Stomach (tissue), 19 donors: ENCODE measurements at regions of chr9 and their contacts with region 1.

Region 1: DNA sequence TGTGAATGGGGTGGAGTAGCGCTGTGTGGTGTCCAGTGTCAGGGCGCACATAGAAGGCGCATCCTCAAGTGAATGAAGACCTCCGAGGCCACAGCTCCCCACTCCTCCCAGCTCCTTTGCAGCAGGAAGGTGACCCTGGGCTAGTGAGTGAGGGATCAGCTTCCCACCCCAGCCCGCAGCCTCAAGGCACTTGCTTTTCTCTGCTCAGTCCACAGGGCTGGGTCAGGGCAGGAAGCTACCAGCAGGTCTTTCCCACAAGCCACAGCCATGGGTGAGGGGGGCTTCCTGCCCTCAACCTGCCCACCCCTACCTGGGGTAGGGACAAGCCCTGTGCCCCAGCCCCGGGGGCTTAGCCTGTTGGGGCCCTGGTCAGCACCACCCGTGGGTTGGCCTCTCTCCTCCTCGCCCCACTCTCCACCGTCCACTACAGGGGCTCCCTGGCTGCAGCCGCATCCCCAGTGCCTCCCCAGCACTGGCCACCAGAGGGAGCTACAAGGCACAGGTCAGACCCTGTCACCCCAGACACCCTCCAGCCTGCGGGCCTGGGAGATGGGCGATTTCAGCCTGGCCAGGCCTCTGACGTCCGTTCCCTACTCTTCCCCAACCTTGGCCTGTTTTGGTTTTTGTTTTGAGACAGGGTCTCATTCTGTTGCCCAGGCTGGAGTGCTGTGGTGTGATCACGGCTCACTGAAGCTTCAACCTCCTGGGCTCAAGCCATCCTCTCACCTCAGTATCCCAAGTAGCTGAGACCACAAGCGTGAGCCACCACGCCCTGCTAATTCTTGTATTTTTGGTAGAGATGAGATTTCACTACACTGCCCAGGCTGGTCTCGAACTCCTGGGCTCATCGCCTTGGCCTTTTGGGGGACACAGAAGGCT is 1.3 kb upstream of the ABCA2 start:
- DNase-seq: peak; percentile 84 to 85
- H3K4me3 ChIP-seq: peak overlapping the region; percentile 57 to 69 (median 64)
- H3K27ac ChIP-seq: peak overlapping the region; percentile 54 to 81 (median 64)
- H3K4me1 ChIP-seq: peaks cover 40 to 75% (median 60%) of the 10 kb centered on the region in 4 donors
- H3K27me3 ChIP-seq: peaks cover 0 to under 1% (median 0%) of the 10 kb centered on the region in 3 donors
- CTCF ChIP-seq: peak in 6 of 7 experiments; percentile 37 to 94 (median 88)
- EP300 ChIP-seq: no peak
- POLR2A ChIP-seq: no peak

Region 2: DNA sequence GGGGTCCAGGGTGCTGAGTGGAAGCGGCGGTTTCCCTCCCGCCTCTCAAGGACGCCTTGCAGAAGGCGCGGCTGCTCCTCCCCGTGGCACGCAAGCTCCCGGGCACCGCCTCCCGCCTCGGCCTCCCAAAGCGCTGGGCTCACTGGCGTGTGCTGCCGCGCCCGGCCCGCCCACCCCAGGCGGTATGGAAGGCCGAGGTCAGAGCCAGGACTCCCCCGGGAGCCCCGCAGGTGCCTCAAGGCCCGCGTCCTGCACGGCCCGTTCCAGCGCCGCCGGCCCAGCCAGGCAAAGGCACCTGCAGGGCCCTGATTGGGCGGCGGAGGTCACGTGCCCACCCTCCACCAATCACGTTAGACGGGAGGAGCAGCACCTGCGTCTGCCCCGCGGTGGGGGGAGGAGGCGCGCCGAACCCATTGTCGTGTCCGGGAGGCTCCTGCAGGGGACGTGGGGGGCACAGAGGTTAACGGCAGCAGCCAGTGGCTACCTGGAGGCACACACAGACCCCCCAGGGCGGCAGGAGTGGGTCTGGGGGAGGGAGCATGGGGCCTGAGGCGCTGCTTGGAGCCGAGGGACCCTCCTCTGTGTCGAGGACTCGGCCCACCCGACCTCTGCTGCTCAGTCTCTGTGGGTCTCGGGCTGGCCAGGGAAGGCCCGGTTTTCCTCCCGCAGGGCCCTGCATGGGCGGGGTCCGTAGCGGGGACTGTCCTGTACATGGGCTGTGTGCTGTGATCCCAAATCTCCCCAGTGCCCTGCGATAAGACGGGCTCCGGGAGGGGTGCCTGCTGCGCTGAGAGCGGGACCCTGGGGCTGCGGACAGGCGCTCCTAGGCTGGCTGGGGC is 79.3 kb before region 1 on chr9:
- intact Hi-C with region 1: loop called (anchors 10 kb)
- DNase-seq: peak; percentile 98
- H3K4me3 ChIP-seq: peak overlapping the region; percentile 60 to 75 (median 64)
- H3K27ac ChIP-seq: peak overlapping the region; percentile 87 to 91 (median 90)
- H3K4me1 ChIP-seq: peaks cover 28 to 56% (median 55%) of the 10 kb centered on the region in 4 donors
- H3K27me3 ChIP-seq: no peaks in the 10 kb centered on the region
- CTCF ChIP-seq: peak in 3 of 7 experiments; percentile 19 to 42 (median 20)
- EP300 ChIP-seq: no peak
- POLR2A ChIP-seq: no peak